ENCODE measurements at regions of chr3 and their contacts with region 1.

Region 1: GRCh38 chr3:122247825-122248185 is 64.3 kb downstream of the CASR start:
- DNase-seq: no peak
- ATAC-seq: no peak
- H3K4me3 ChIP-seq: no peak overlapping the region
- H3K27ac ChIP-seq: no peak overlapping the region
- H3K4me1 ChIP-seq: no peaks in the 10 kb centered on the region
- CTCF ChIP-seq: no peak
- EP300 ChIP-seq: no peak
- POLR2A ChIP-seq: no peak
- RAD21 ChIP-seq: no peak

Region 2: DNA sequence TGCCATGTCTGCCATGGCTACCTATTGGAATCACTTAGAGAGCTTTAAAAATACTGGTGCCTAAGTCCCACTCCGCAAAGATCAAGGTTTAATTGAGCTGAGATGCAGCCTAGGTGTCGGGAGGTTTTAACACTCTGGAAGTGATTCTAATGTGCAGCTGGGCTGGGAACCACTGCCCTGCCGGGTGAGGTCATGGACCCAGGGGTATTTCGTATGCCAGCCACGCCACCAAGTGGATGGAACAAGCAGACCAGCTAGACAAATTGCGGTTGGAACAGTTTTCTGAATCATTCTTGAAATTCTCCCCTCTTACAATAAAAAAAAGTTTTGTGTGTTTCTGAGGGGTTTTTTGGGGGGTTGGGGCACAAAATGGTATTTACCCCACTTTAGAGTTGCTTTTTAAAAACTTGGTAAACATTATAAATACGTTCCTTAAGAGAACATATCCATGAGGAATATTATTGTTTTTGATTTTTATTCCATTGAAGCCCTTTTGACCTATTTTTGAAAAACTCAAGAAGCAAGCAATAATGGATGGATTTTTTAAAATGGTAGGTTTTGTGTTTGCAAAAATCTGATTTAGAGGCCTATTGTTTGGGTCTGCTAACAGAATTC is 11.1 kb after region 1 on chr3:
- CTCF ChIA-PET with region 1: interaction called, 16 read pairs
- POLR2A ChIA-PET with region 1: no interaction called
- DNase-seq: peak; percentile 60 to 61
- ATAC-seq: peak; percentile 94 to 95
- H3K4me3 ChIP-seq: no peak overlapping the region
- H3K27ac ChIP-seq: no peak overlapping the region
- H3K4me1 ChIP-seq: no peaks in the 10 kb centered on the region
- CTCF ChIP-seq: peak; percentile 42; the same call in 2 of the 3 replicates
- EP300 ChIP-seq: no peak
- POLR2A ChIP-seq: no peak
- RAD21 ChIP-seq: peak; percentile 77 to 82

Measured in A549 (cell line).